Naive thymus-derived CD8-positive, alpha-beta T cell (primary cell): ENCODE measurements at regions of chr17 and their contacts with region 1.

Region 1: DNA sequence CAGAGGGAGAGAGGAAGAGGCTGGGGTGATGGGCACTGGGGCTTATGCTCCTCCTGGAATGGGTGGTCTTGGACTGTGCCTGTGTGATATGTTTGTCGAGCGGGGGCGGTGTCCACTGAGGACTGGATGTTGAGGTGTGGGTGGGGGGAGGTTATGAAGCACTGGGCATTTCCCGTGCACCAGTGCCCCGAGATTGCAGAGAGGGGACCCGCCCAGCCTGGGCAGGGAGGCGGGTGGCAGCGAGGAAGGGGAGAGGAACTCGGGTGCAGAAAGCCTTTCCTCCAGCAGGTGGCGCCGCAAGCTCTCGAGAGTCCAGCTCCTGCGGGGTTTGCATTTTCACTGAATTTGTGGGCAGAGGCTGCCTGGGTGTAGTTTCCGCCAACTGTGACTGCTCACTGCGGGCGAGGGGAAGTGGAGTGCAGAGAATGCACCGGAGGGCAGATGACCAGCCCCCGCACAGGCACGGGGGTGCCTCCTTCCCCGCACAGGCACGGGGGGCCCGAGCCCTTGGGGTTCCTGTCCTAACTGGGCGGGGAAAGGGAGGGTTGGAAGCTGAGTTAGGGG is 190.6 kb downstream of the SEC14L1 start:
- DNase-seq: peak; percentile 88 to 97 (median 95)
- ATAC-seq: peak; percentile 80 to 89
- H3K4me3 Mint-ChIP-seq: peak overlapping the region; percentile 71 to 90 (median 84)
- H3K27ac Mint-ChIP-seq: peak overlapping the region; percentile 84 to 97 (median 91)
- H3K4me1 Mint-ChIP-seq: peaks cover 23 to 52% (median 47%) of the 10 kb centered on the region in 4 donors
- H3K27me3 Mint-ChIP-seq: peaks cover 0 to 2% (median 0%) of the 10 kb centered on the region in 5 donors

Region 2: DNA sequence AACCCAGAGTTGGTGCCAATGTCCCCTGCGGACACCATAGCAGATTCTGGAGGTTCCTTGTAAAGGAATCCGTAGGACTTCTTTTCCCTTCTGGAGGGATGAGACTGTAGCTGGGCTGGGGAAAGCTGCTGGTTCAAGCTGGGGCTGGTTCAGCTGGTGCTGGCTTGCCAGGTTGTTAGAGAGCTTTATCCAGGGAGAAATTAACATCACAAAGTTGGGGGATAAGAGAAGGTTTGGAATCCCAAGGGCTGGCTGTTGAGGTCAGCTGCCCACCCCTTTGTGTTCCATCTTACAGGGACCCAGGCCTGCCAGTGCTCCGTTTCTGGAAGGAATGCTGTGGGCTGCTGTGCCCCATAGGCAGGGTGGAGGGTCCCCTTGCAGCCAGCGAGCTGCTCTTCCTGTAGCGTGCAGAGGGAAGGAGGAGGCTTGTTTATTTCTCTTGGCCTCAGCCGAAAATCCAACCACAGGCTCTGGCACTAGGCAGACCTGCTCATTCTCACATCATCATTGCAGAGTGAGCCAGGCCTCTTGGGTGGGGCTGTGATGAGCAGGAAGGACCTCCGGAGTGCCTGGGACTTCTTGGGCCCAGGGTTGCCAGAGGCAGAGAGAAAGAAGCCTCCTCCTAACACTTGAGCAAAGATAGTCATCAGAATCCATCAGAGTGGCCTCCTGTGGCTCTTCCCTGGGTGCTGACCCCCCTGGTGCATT is 60.4 kb after region 1 on chr17:
- POLR2A ChIA-PET with region 1: interaction called, 55 read pairs
- DNase-seq: peak in 3 of 10 donors; percentile 30 to 43 (median 38)
- ATAC-seq: peak; percentile 47 to 48
- H3K4me3 Mint-ChIP-seq: peak overlapping the region; percentile 36 to 78 (median 68)
- H3K27ac Mint-ChIP-seq: peak overlapping the region; percentile 75 to 90 (median 87)
- H3K4me1 Mint-ChIP-seq: peaks cover 45 to 91% (median 84%) of the 10 kb centered on the region in 4 donors
- H3K27me3 Mint-ChIP-seq: no peaks in the 10 kb centered on the region

Region 3: GRCh38 chr17:77416105-77416713 is 84.8 kb after region 1 on chr17:
- POLR2A ChIA-PET with region 1: interaction called, 164 read pairs
- DNase-seq: no peak
- ATAC-seq: peak in 1 of 2 donors; percentile 13
- H3K4me3 Mint-ChIP-seq: peak overlapping the region in 7 of 10 donors; percentile 11 to 55 (median 32)
- H3K27ac Mint-ChIP-seq: peak overlapping the region in 8 of 10 donors; percentile 22 to 76 (median 66)
- H3K4me1 Mint-ChIP-seq: peaks cover 23 to 81% (median 70%) of the 10 kb centered on the region in 4 donors
- H3K27me3 Mint-ChIP-seq: no peaks in the 10 kb centered on the region

Region 4: GRCh38 chr17:77444984-77445759 is 113.8 kb after region 1 on chr17:
- POLR2A ChIA-PET with region 1: interaction called, 48 read pairs
- DNase-seq: peak; percentile 67 to 98 (median 88)
- ATAC-seq: peak; percentile 60 to 77
- H3K4me3 Mint-ChIP-seq: peak overlapping the region; percentile 72 to 99 (median 86)
- H3K27ac Mint-ChIP-seq: peak overlapping the region; percentile 93 to 100 (median 99)
- H3K4me1 Mint-ChIP-seq: peaks cover 59 to 98% (median 96%) of the 10 kb centered on the region in 4 donors
- H3K27me3 Mint-ChIP-seq: peaks cover 0 to 4% (median 0%) of the 10 kb centered on the region in 5 donors

Region 5: GRCh38 chr17:77465358-77466041 is 134.1 kb after region 1 on chr17:
- POLR2A ChIA-PET with region 1: interaction called, 25 read pairs
- DNase-seq: peak in 9 of 10 donors; percentile 70 to 92 (median 80)
- ATAC-seq: peak; percentile 82 to 95
- H3K4me3 Mint-ChIP-seq: peak overlapping the region; percentile 70 to 88 (median 81)
- H3K27ac Mint-ChIP-seq: peak overlapping the region; percentile 75 to 99 (median 94)
- H3K4me1 Mint-ChIP-seq: peaks cover 48 to 94% (median 92%) of the 10 kb centered on the region in 4 donors
- H3K27me3 Mint-ChIP-seq: no peaks in the 10 kb centered on the region

Region 6: DNA sequence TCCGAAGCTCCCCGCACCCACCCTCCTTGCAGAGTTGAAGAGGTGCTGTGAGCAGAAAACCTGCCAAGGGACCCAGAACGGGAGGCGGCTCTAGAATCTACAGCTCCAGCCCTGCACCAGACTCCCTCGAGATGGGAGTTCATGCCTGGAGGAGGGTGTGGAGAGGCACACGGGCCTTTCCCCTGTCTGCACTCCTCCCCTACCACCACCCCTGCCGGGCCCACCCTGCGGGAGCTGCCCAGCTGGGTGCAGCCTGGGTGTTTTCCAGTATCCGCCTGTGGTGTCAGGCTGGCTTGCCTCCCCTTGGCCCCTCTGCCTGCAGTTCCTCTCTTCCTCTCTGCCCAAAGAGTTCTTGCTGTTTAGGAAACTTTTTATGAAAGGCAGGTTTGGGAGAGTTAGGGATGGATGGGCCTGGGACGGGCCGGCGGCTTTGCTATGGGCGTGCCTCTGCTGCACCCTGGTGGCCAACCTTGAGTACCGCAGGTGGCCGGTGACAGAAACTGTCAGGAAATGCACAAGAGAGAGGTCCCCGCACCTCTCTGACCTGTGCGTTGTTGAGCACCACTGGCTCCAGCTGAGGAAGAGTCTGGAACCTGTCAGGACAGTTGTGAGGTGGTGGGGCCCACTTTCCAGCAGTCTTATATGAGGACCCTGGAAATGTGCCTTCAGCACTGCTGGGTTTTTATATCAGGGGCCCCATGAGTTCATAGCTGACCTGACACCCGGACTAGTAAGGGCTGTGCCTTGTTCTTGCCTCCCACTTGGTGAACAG is 163.5 kb after region 1 on chr17:
- POLR2A ChIA-PET with region 1: interaction called, 33 read pairs
- DNase-seq: peak; percentile 59 to 83 (median 75)
- ATAC-seq: peak; percentile 64
- H3K4me3 Mint-ChIP-seq: peak overlapping the region in 3 of 10 donors; percentile 6 to 49 (median 16)
- H3K27ac Mint-ChIP-seq: peak overlapping the region; percentile 80 to 94 (median 90)
- H3K4me1 Mint-ChIP-seq: peaks cover 12 to 34% (median 21%) of the 10 kb centered on the region in 4 donors
- H3K27me3 Mint-ChIP-seq: no peaks in the 10 kb centered on the region